H1 (cell line): ENCODE measurements at regions of chr1 and their contacts with region 1.

Region 1: DNA sequence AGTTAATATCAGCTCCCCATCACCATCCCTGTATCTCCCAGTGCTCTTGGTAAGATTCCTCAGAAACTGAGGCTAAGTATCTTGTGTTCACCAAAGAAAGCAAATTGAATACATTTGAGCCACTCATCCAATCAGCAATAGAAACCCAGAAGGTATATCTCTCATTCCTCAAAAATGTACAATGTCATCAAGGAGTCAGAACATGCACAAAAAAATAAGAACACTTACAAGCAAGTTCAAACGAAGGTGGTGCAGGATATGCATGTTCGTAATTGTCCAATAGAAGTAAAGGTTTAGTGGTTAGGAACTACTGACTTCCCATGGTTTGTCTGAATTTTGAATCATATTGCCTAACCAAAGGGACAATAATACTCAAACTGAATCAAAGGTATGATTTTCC is 24.3 kb downstream of the RXRG start:
- DNase-seq: no peak
- H3K4me3 ChIP-seq: no peak overlapping the region
- H3K27ac ChIP-seq: no peak overlapping the region
- H3K4me1 ChIP-seq: no peaks in the 10 kb centered on the region
- H3K27me3 ChIP-seq: no peaks in the 10 kb centered on the region; a peak in 1 of 7 replicates
- CTCF ChIP-seq: no peak
- EP300 ChIP-seq: no peak
- POLR2A ChIP-seq: no peak
- RAD21 ChIP-seq: no peak

Region 2: GRCh38 chr1:165403835-165404482 is 16.7 kb before region 1 on chr1:
- CTCF ChIA-PET with region 1: interaction called, 16 read pairs
- POLR2A ChIA-PET with region 1: no interaction called
- DNase-seq: peak in 1 of 2 experiments; percentile 69
- H3K4me3 ChIP-seq: no peak overlapping the region
- H3K27ac ChIP-seq: no peak overlapping the region
- H3K4me1 ChIP-seq: no peaks in the 10 kb centered on the region
- H3K27me3 ChIP-seq: no peaks in the 10 kb centered on the region; a peak in 1 of 7 replicates
- CTCF ChIP-seq: peak; percentile 61 to 95 (median 89)
- EP300 ChIP-seq: no peak
- POLR2A ChIP-seq: no peak
- RAD21 ChIP-seq: peak; percentile 95 to 98

Region 3: GRCh38 chr1:165436994-165437393 is 16.3 kb after region 1 on chr1:
- CTCF ChIA-PET with region 1: no interaction called
- POLR2A ChIA-PET with region 1: no interaction called
- DNase-seq: no peak
- H3K4me3 ChIP-seq: no peak overlapping the region
- H3K27ac ChIP-seq: no peak overlapping the region
- H3K4me1 ChIP-seq: peaks cover 0 to 4% (median 0%) of the 10 kb centered on the region in 4 experiments; a peak in 2 of 7 replicates
- H3K27me3 ChIP-seq: peaks cover 2 to 13% (median 10%) of the 10 kb centered on the region in 4 experiments; a peak in 6 of 7 replicates
- CTCF ChIP-seq: no peak
- EP300 ChIP-seq: no peak
- POLR2A ChIP-seq: no peak
- RAD21 ChIP-seq: no peak

Region 4: GRCh38 chr1:165549973-165550372 is 129.3 kb after region 1 on chr1:
- CTCF ChIA-PET with region 1: no interaction called
- POLR2A ChIA-PET with region 1: no interaction called
- DNase-seq: no peak
- H3K4me3 ChIP-seq: no peak overlapping the region
- H3K27ac ChIP-seq: no peak overlapping the region
- H3K4me1 ChIP-seq: peaks cover 0 to 3% (median 0%) of the 10 kb centered on the region in 4 experiments; a peak in 1 of 7 replicates
- H3K27me3 ChIP-seq: peaks cover 0 to 3% (median 0%) of the 10 kb centered on the region in 4 experiments; a peak in 2 of 7 replicates
- CTCF ChIP-seq: no peak
- EP300 ChIP-seq: no peak
- POLR2A ChIP-seq: no peak
- RAD21 ChIP-seq: no peak